ENCODE measurements at regions of chr1 and their contacts with region 1.

Region 1: DNA sequence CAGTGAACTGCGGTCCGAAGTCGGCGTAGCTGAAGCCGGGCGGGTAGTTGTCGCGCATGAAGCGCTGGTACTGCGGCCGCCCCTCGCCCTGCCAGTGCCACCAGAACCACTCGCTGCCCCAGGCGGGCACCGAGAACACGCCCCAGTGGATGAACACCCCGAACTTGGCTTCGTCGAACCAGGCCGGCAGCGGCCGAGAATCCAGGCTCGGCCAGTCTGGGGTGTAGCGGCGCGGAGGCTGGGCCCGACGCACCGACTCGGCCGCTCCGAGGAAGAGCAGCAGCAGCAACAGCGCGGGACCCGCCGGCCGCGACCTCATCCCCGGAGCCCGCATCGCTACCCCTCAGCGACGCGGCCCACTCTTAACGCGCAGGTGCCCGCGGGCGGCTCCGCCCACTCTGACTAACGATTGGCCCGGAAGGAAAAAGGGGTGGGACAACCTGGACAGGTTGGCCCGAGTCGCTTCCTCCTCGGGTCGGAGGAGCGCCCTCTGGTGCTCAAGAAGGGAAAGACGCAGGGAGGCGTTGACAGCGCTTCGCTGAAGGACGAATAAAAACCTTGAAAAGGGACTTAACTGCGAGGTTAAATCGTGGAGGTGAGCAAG is at the start of gene FUCA1:
- DNase-seq: peak; percentile 96
- total RNA-seq, gene FUCA1: 13.3 TPM

Region 2: DNA sequence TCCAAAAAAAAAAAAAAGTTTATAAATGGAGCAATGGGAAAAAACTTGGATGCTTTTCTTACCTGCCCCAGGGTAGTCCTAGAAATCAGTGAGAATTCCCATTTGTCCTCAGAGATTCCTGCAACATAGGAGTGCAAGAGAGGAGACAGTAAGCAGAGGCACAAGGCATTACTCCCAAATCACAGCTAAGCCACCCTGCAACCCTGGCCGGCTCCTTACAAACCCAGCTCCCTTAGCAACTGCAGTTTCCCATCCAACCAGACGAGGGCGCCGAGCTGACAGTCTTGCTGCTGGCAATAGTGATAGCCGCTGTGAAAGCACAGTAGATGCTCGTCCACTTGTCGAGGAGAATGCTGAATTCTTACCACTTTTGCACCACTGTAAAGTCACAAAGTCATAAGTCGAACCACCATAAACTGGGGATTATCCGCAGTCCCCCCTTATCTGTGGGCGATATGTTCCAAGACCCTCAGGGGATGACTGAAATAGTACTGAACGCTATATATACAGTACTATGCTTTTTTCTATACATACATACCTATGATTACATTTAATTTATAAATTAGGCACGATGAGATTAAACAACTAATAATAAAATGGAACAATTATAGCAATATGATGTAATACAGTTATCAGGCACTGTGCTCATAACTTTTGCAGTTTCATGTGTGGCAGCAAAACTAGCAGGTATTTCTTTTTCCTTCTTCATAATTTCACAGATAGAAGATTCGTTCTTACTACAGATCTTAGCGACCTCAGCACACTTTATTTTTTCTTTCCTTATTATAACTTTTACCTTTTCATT is 95.8 kb before region 1 on chr1:
- intact Hi-C with region 1: loop called (anchors 5 kb)
- DNase-seq: peak; percentile 94

Region 3: DNA sequence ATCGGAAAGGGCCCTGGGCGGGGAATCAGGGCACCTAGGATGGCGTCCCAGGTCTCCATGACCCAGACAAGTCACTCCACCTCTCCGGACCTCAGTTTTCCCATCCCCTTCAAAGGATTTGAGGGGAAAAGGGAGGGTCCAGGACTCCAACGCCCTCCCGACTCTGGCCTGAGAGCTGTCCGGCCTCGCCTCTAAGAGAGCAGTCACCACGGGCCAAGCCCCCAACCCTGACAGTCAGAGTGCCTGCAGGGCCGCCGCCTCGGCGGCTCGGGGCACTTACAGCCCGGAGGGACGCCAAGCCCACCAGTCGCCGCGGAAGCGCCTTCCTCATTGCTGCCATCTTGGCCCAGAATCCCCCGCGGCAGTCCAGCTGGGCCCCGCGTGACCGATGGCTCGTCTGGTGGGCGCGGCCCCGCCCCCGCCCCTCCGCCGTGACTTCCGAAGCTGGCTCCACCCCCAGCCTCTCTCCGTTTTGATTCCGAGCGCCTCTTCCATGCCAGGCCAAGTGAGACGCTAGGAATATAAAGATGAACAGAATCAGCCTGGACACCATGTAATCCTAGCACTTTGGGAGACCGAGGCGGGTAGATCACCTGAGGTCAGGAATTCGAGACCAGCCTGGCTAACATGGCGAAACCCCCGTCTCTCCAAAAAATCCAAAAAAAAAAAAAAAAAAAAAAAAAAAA is 42.8 kb before region 1 on chr1 and contains the start of gene HMGCL:
- intact Hi-C with region 1: loop called (anchors 2 kb)
- DNase-seq: peak; percentile 96
- total RNA-seq, gene HMGCL: 27.9 TPM

Region 4: DNA sequence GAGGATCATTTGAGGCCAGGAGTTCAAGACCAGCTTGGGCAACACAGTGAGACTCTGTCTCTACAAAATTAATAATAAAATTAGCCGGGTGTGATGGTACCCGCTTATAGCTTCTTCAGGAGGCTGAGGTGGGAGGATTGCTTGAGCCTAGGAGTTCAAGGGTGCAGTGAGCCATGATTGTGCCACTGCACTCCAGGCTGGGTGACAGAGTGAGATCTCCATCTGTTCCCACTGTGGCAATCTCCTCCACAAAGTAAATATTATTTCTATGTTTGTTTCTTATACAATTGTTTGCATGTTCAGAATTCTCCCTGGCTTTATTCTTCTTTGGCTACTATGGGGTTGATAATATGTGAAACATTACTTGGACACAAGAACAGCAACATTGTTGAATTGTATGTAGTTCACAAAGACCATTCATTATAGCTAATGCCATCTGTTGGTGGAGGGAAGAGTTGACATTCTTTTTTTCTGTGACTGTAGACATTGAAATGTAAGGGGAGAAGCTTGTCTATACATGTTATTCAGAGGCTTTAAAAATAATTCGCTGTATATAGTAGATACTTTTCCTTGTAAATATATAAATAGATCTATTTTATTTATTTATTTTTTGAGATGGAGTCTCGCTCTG is 159.9 kb after region 1 on chr1:
- intact Hi-C with region 1: loop called (anchors 5 kb)
- DNase-seq: no peak

Measured in cardiac septum (tissue), 1 donor.